ENCODE measurements at regions of chr5 and their contacts with region 1.

Region 1: DNA sequence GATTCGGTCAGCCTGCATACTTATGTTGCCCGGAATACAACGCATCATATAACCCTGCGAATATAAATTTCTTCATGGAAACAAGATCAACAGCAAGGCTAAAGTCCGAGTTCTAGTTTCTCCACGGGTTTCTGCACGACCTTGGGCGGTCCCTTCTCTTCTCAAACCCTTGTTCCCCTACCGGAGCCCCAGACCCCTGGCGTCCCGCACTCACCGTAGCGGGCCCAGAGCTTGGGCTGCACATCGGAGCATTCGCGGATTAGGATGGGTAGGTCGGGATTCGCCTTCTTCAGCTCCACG is 438 bp downstream of the NDUFA2 start:
- DNase-seq: no peak
- H3K4me3 ChIP-seq: peak overlapping the region; percentile 61
- CTCF ChIP-seq: no peak

Region 2: GRCh38 chr5:140542972-140543371 is 104.0 kb before region 1 on chr5:
- in situ Hi-C with region 1: loop called (anchors 5 kb)
- DNase-seq: no peak
- H3K4me3 ChIP-seq: no peak overlapping the region
- CTCF ChIP-seq: no peak

Region 3: DNA sequence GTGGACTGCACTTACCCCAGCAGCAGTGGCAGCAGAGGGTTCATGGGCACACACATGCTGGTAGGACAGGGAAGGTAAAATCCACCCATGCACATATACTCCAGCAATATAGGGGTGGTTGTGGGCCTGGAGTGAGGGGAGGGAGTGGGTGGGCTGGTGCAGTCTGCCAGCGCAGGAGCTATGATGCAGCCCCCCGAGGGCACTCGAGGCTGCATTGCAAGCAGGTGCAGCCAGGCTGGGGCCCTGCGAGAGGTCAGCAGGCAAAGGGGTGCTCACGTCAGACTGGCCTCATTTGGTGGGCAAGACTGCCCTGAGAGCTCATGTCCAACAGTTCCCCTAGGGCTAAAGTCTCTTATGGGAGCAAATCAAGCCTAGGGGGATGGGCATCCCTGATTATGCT is 106.6 kb after region 1 on chr5:
- in situ Hi-C with region 1: no loop called
- DNase-seq: no peak
- H3K4me3 ChIP-seq: no peak overlapping the region
- CTCF ChIP-seq: no peak